Activated CD8-positive, alpha-beta memory T cell treated with anti-CD3 and anti-CD28 coated beads, Interleukin-2, amount 10 ng/mL, durations not matched to agents 7 days and 5 days (primary cell): ENCODE measurements at regions of chr15 and their contacts with region 1.

Region 1: DNA sequence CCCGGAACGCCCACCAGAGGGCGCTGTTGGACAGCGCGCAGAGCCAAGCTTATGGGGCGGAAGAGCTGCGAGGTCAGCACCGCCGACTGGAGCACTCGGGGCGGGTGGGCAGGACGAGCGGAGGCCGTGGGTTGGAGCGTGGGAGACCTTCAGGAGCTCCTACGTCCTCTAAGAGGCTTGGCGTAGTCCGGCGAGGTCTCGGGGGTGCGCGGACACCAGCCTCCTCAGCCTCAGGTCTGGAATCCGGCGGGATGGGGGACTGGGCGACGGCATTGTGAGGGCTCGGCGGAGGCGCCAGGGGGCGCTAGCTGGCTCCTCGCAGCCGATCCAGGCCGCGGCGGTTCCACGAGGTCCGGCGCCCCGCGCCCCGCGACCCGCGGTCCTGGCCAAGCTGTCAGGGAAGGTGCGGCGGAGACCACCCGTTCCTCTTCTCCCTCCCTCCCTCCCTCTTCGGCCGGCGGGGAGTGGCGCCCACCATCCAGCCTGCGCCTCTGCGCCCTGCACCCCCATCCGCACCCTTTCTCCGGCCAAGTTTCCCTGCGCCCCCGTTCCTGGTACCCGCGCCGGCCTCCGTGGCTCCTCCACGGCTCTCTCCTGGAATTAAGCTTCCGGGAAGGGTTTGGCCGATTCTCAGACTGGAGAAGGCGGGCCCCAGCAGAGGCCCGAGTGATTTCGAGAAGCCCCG is 24.3 kb upstream of the POLG start:
- DNase-seq: peak; percentile 86
- ATAC-seq: peak; percentile 93
- H3K4me3 Mint-ChIP-seq: peak overlapping the region; percentile 73
- H3K27ac Mint-ChIP-seq: peak overlapping the region; percentile 54
- H3K4me1 Mint-ChIP-seq: peaks cover 7% of the 10 kb centered on the region
- H3K27me3 Mint-ChIP-seq: peaks cover 83% of the 10 kb centered on the region

Region 2: DNA sequence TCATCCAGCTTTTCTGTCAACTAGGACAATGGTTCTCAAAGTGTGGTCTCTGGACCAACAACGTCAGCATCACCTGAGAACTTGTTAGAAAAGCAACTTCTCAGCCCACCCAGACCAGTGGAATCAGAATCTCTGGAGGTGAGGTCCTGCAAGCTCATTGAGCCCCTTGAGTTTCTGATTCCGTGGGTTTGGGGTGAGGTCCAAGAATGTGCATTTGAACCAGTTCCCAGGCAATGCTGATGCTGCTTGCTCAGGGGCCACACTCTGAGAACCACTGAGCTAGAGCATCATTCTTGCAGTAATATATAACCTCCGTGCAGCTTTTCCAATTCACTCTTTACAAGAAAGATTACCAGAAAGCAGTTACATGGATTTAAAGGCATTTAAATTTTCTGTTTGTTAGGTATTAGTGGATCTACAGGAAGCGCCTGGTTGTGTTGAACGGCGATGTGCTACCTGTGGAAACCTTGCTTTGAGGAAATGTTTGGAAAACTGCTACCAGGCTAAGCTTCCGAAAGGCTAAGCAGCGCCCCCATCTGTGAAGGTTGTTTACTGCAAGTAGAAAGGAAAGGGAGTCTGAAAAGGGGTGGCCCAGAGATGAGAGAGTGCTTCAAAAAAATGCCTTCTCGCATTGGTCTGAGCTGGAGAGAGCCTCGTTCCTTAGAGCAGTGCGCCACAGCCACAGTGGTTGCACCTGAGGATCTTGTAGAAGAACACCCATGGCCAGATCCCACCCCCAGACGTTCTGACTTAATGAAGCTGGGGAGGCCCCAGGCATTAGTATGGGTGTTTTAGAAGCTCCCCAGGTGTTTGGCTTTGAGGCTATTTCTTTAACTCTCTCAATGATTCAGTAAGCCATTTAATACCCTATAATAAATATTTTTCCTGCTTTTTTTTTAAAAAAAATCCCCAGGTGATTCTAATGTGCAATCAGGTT is 187.5 kb before region 1 on chr15:
- CTCF ChIA-PET with region 1: no interaction called
- DNase-seq: peak; percentile 47
- ATAC-seq: no peak
- H3K4me3 Mint-ChIP-seq: no peak overlapping the region
- H3K27ac Mint-ChIP-seq: no peak overlapping the region
- H3K4me1 Mint-ChIP-seq: peaks cover 18% of the 10 kb centered on the region
- H3K27me3 Mint-ChIP-seq: no peaks in the 10 kb centered on the region

Region 3: DNA sequence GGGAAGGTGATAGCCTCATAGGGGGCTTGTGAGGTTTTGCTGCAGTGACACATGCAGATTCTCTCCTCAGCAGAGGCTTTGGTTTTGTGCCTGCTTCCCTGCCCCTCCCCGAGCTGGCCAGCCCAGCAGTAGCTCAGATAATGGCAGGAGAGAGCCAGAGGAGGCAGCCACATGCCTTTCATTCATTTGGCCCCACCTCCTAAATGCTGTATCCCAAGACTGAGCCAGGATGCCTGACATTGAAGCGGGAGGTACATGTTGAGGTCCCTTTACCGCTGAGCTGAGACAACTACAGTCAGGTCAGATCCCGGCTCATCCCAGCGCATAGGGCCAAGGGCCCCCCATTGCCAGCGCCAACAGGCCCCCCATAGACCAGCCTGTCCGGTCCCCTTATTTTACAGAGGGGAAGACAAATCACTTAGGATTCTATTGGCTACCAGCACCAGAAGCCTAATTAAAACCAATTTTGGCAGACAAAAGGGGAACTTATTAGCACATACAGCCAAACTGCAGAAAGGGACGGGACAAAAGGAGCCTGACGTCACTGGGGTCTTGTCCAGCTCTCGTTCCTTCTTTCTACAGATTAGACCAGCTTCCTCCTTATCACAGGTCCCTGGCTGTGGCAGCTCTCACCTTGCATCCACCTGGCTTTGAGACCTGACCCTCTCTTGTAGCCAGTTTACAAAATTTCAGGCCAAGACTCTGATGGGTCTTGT is 12.2 kb before region 1 on chr15:
- CTCF ChIA-PET with region 1: interaction called, 76 read pairs
- DNase-seq: no peak
- ATAC-seq: no peak
- H3K4me3 Mint-ChIP-seq: no peak overlapping the region
- H3K27ac Mint-ChIP-seq: no peak overlapping the region
- H3K4me1 Mint-ChIP-seq: peaks cover 8% of the 10 kb centered on the region
- H3K27me3 Mint-ChIP-seq: peaks cover 31% of the 10 kb centered on the region

Region 4: GRCh38 chr15:89399238-89400120 is 40.6 kb after region 1 on chr15:
- CTCF ChIA-PET with region 1: interaction called, 138 read pairs
- DNase-seq: peak; percentile 71
- ATAC-seq: peak; percentile 86
- H3K4me3 Mint-ChIP-seq: peak overlapping the region; percentile 75
- H3K27ac Mint-ChIP-seq: peak overlapping the region; percentile 56
- H3K4me1 Mint-ChIP-seq: peaks cover 17% of the 10 kb centered on the region
- H3K27me3 Mint-ChIP-seq: peaks cover 72% of the 10 kb centered on the region

Region 5: GRCh38 chr15:89423981-89424380 is 65.1 kb after region 1 on chr15:
- CTCF ChIA-PET with region 1: interaction called, 154 read pairs
- DNase-seq: no peak
- ATAC-seq: no peak
- H3K4me3 Mint-ChIP-seq: no peak overlapping the region
- H3K27ac Mint-ChIP-seq: no peak overlapping the region
- H3K4me1 Mint-ChIP-seq: no peaks in the 10 kb centered on the region
- H3K27me3 Mint-ChIP-seq: peaks cover 52% of the 10 kb centered on the region

Region 6: GRCh38 chr15:89442671-89443307 is 83.9 kb after region 1 on chr15:
- CTCF ChIA-PET with region 1: interaction called, 44 read pairs
- DNase-seq: peak; percentile 68
- ATAC-seq: peak; percentile 49
- H3K4me3 Mint-ChIP-seq: no peak overlapping the region
- H3K27ac Mint-ChIP-seq: no peak overlapping the region
- H3K4me1 Mint-ChIP-seq: peaks cover 5% of the 10 kb centered on the region
- H3K27me3 Mint-ChIP-seq: peaks cover 22% of the 10 kb centered on the region